ENCODE measurements at regions of chr9 and their contacts with region 1.

Region 1: GRCh38 chr9:72271613-72272478 is 93.2 kb downstream of the ZFAND5 start:
- DNase-seq: peak in 1 of 2 experiments; percentile 67
- H3K4me3 ChIP-seq: no peak overlapping the region
- H3K27ac ChIP-seq: no peak overlapping the region
- H3K4me1 ChIP-seq: no peaks in the 10 kb centered on the region
- H3K27me3 ChIP-seq: no peaks in the 10 kb centered on the region
- CTCF ChIP-seq: peak; percentile 5 to 77 (median 75)
- EP300 ChIP-seq: no peak
- POLR2A ChIP-seq: no peak
- RAD21 ChIP-seq: peak; percentile 86

Region 2: DNA sequence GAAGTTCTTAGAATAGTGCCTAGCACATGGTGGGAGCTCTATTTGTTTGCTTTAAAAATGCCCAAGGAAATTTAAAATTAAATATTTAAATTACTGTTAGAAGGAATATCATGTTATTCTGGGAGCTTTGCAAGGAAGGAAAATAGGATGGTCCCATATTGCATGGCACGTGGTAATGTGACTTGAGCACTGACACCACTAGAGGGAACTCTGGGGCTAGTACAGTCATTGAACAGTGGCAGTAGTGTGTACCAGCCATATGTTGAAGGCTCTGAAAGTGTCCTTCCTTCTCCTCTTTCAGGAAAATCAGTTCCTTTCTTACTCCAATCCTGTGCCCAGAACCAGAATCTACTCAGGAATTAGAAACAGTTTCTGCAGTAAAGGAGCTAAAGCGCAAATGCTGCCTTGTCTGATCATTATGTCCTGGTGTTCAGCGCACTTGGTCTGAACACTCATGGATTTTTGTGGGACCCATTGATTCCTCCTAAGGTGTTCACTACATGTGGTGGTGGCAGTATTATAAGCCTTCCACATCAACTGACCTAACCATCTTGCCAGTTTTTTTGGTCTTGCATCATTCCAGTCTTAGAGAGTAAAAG is 68.5 kb before region 1 on chr9:
- CTCF ChIA-PET with region 1: interaction called, 34 read pairs
- POLR2A ChIA-PET with region 1: no interaction called
- DNase-seq: no peak
- H3K4me3 ChIP-seq: no peak overlapping the region
- H3K27ac ChIP-seq: no peak overlapping the region
- H3K4me1 ChIP-seq: no peaks in the 10 kb centered on the region
- H3K27me3 ChIP-seq: no peaks in the 10 kb centered on the region
- CTCF ChIP-seq: peak; percentile 23 to 77 (median 62)
- EP300 ChIP-seq: no peak
- POLR2A ChIP-seq: no peak
- RAD21 ChIP-seq: peak; percentile 69 to 78

Region 3: DNA sequence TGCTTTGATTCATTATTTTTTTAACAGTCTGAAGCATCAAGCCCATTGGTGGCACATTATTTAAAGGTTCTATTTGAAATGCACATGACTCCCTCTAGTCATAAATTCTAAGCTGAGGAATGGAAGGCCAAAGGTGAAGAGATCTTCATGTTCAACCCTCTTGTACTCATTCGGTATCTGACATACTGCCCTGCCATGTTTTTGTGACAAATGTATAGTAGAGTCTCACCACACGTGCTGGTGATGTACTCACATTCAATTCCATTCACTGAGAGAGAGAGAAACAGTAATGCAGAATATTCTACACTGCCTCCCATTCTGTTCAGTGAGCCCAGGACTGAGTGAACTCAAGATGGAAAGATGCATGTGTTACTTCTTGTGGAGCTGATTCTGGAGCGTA is 24.3 kb before region 1 on chr9:
- CTCF ChIA-PET with region 1: interaction called, 10 read pairs
- POLR2A ChIA-PET with region 1: no interaction called
- DNase-seq: no peak
- H3K4me3 ChIP-seq: no peak overlapping the region
- H3K27ac ChIP-seq: no peak overlapping the region
- H3K4me1 ChIP-seq: no peaks in the 10 kb centered on the region
- H3K27me3 ChIP-seq: no peaks in the 10 kb centered on the region
- CTCF ChIP-seq: no peak
- EP300 ChIP-seq: no peak
- POLR2A ChIP-seq: no peak
- RAD21 ChIP-seq: no peak